ENCODE measurements at regions of chr18 and their contacts with region 1.

Region 1: DNA sequence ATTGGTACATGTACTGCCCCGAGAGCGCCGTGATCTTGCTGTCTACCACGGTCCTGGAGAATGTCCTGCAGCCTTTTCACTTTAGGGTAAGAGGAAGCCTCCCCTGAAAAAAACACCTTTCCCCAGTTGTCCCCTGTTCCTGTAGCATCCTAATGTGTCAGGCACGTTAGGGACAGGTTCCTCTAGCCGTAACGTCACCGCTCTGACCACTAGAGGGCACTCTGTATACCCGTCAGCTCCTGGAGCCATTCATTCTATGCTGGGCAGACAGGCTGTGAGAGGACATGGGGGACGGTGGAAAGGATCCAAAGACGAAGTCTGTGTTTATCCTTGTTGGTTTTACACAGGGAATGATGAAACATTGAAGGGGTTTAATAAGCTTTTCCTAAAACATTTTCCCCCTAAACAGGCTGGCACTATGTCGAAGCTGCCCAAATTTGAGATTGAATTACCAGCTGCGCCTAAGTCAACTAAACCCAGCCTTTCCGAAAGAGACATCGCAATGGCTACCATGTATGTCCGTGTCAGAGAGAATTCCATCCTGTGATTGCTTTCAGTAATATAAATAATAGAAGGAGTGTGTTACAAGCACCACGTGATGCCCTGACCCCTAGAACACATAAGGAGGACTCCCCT is 12.7 kb downstream of the RMC1 start:
- DNase-seq: peak; percentile 89
- H3K4me3 Mint-ChIP-seq: no peak overlapping the region
- H3K27ac Mint-ChIP-seq: peak overlapping the region; percentile 60
- H3K4me1 Mint-ChIP-seq: peaks cover 7% of the 10 kb centered on the region
- H3K27me3 Mint-ChIP-seq: no peaks in the 10 kb centered on the region

Region 2: GRCh38 chr18:23529597-23529996 is 13.6 kb after region 1 on chr18:
- CTCF ChIA-PET with region 1: interaction called, 11 read pairs
- intact Hi-C with region 1: no loop called
- DNase-seq: peak; percentile 36
- H3K4me3 Mint-ChIP-seq: no peak overlapping the region
- H3K27ac Mint-ChIP-seq: peak overlapping the region; percentile 20
- H3K4me1 Mint-ChIP-seq: peaks cover 16% of the 10 kb centered on the region
- H3K27me3 Mint-ChIP-seq: no peaks in the 10 kb centered on the region

Region 3: GRCh38 chr18:23578891-23579653 is 63.0 kb after region 1 on chr18:
- CTCF ChIA-PET with region 1: interaction called, 22 read pairs
- intact Hi-C with region 1: no loop called
- DNase-seq: no peak
- H3K4me3 Mint-ChIP-seq: no peak overlapping the region
- H3K27ac Mint-ChIP-seq: no peak overlapping the region
- H3K4me1 Mint-ChIP-seq: peaks cover 53% of the 10 kb centered on the region
- H3K27me3 Mint-ChIP-seq: no peaks in the 10 kb centered on the region

Region 4: GRCh38 chr18:23689031-23689615 is 173.1 kb after region 1 on chr18 and contains the start of gene LAMA3:
- CTCF ChIA-PET with region 1: no interaction called
- intact Hi-C with region 1: loop called (anchors 1 kb)
- DNase-seq: peak; percentile 40
- H3K4me3 Mint-ChIP-seq: peak within 1 kb of the TSS; percentile 60
- H3K27ac Mint-ChIP-seq: no peak within 1 kb of the TSS
- H3K4me1 Mint-ChIP-seq: peaks cover 5% of the 10 kb centered on the region
- H3K27me3 Mint-ChIP-seq: peaks cover 31% of the 10 kb centered on the region
- total RNA-seq, gene LAMA3: 0.05 to 0.10 TPM

Region 5: GRCh38 chr18:23812546-23813440 is 296.8 kb after region 1 on chr18:
- CTCF ChIA-PET with region 1: interaction called, 4 read pairs
- intact Hi-C with region 1: loop called (anchors 1 kb)
- DNase-seq: no peak
- H3K4me3 Mint-ChIP-seq: no peak overlapping the region
- H3K27ac Mint-ChIP-seq: no peak overlapping the region
- H3K4me1 Mint-ChIP-seq: peaks cover 21% of the 10 kb centered on the region
- H3K27me3 Mint-ChIP-seq: no peaks in the 10 kb centered on the region

Region 6: DNA sequence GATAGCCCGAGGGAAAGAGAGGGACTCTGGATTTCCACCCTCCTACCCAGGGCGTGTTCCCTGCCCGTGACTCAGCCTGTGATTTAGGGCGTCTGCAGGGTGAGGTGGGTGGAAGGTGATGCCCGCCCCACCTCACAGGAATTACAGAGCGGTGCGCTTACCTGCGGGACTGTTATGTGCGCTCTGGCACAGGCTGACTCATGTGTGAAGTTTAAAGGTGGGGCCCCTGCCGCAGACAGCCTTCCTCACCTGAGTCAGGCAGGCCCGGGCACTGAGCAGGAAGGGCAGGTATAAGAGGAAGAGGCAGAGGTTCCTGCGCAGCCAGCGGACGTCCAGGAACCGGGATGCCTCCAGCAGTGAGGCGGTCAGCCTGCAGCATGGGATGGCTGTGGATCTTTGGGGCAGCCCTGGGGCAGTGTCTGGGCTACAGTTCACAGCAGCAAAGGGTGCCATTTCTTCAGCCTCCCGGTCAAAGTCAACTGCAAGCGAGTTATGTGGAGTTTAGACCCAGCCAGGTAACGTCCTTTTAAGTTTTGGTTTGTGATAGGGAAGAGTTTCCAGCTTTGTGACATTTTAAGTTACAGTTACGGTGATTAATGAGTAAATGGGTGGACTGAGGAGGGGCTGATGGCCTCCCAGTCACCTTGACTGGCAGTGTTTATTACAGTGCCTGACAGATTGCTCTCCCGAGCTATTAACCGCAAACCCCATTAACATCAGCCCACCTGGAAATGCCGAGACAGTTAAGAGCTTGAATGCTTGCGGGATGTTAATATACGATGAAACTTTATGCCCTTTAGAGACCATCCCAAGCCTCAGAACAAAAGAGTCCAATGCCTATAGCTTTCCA is 356.9 kb after region 1 on chr18:
- CTCF ChIA-PET with region 1: no interaction called
- intact Hi-C with region 1: no loop called
- DNase-seq: peak; percentile 57
- H3K4me3 Mint-ChIP-seq: no peak overlapping the region
- H3K27ac Mint-ChIP-seq: no peak overlapping the region
- H3K4me1 Mint-ChIP-seq: peaks cover 25% of the 10 kb centered on the region
- H3K27me3 Mint-ChIP-seq: no peaks in the 10 kb centered on the region